CD8-positive, alpha-beta T cell (primary cell): ENCODE measurements at regions of chr12 and their contacts with region 1.

Region 1: DNA sequence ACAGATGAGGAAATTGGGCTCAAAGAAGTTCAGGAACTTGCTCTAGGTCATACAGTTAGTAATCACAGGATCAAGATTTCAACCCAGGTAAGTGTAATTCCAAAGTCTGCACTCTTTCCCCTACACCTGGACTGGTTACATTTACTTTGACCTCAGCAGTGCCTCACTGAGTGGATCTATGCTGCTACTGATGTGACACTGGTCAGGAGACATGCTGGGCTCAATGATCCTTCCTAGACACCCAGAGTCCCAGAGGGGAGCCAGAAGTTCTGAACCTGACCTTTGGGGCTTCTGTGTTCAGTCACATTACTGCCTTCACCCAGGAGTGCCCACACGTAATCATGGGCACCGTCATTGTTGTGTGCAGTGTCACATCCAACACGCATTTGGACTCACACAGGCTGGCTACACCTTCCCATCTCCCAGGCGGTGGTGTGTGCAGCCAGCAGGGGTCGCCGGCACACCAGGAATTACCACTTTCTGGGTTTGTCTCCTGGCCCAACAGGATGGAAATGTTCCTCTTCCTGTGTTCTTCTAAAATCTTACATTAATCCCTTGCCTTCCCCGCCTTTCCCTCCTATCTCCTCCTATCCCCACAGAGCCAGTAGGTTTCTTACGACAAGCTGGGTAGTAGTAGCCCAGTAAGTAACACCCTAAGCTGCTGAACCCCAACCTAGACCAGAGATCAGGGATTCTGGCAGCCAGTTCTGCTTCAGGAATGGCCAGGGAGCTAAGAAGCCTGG is 25.6 kb downstream of the CALCOCO1 start:
- DNase-seq: peak; percentile 52 to 86 (median 77)
- ATAC-seq: peak; percentile 92
- H3K4me3 ChIP-seq: no peak overlapping the region
- H3K4me3 Mint-ChIP-seq: no peak overlapping the region
- H3K27ac ChIP-seq: no peak overlapping the region
- H3K27ac Mint-ChIP-seq: no peak overlapping the region
- H3K4me1 ChIP-seq: peaks cover 3% of the 10 kb centered on the region
- H3K4me1 Mint-ChIP-seq: peaks cover 5% of the 10 kb centered on the region
- H3K27me3 ChIP-seq: peaks cover 19 to 24% of the 10 kb centered on the region in 2 experiments
- H3K27me3 Mint-ChIP-seq: peaks cover 77% of the 10 kb centered on the region
- CTCF ChIP-seq: peak; percentile 83

Region 2: GRCh38 chr12:53623548-53624385 is 77.9 kb before region 1 on chr12:
- CTCF ChIA-PET with region 1: no interaction called
- POLR2A ChIA-PET with region 1: no interaction called
- intact Hi-C with region 1: no loop called
- DNase-seq: no peak
- ATAC-seq: no peak
- H3K4me3 ChIP-seq: no peak overlapping the region
- H3K4me3 Mint-ChIP-seq: peak overlapping the region; percentile 93
- H3K27ac ChIP-seq: peak overlapping the region in 1 of 2 experiments; percentile 30
- H3K27ac Mint-ChIP-seq: peak overlapping the region; percentile 85
- H3K4me1 ChIP-seq: peaks cover 33% of the 10 kb centered on the region
- H3K4me1 Mint-ChIP-seq: peaks cover 52% of the 10 kb centered on the region
- H3K27me3 ChIP-seq: no peaks in the 10 kb centered on the region
- H3K27me3 Mint-ChIP-seq: no peaks in the 10 kb centered on the region
- CTCF ChIP-seq: no peak

Region 3: DNA sequence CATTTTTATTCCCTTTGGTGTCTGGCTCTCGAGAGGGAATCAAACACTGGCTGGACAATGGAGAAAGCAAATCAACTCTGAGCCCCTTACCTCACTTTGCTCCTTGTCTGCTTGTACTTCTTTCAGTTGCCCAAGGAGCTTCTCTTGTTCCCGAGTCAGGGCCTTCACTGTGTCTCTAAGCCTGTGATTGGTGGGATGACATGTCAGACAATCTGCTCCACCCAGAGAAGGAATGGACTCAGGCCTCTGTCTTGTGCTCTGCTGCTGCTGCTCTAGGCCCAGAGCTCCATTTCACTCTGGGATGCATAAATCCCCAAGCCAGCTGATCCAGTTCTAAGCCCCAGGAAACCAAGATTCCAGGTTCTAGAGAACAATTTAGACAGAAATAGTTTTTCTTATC is 18.0 kb after region 1 on chr12:
- CTCF ChIA-PET with region 1: interaction called, 11 read pairs
- POLR2A ChIA-PET with region 1: no interaction called
- intact Hi-C with region 1: no loop called
- DNase-seq: no peak
- ATAC-seq: no peak
- H3K4me3 ChIP-seq: no peak overlapping the region
- H3K4me3 Mint-ChIP-seq: no peak overlapping the region
- H3K27ac ChIP-seq: no peak overlapping the region
- H3K27ac Mint-ChIP-seq: no peak overlapping the region
- H3K4me1 ChIP-seq: no peaks in the 10 kb centered on the region
- H3K4me1 Mint-ChIP-seq: no peaks in the 10 kb centered on the region
- H3K27me3 ChIP-seq: no peaks in the 10 kb centered on the region
- H3K27me3 Mint-ChIP-seq: no peaks in the 10 kb centered on the region
- CTCF ChIP-seq: no peak

Region 4: GRCh38 chr12:53733051-53733806 is 31.5 kb after region 1 on chr12:
- CTCF ChIA-PET with region 1: interaction called, 42 read pairs
- POLR2A ChIA-PET with region 1: interaction called, 4 read pairs
- intact Hi-C with region 1: no loop called
- DNase-seq: no peak
- ATAC-seq: no peak
- H3K4me3 ChIP-seq: no peak overlapping the region
- H3K4me3 Mint-ChIP-seq: no peak overlapping the region
- H3K27ac ChIP-seq: no peak overlapping the region
- H3K27ac Mint-ChIP-seq: no peak overlapping the region
- H3K4me1 ChIP-seq: peaks cover 9% of the 10 kb centered on the region
- H3K4me1 Mint-ChIP-seq: peaks cover 12% of the 10 kb centered on the region
- H3K27me3 ChIP-seq: peaks cover 0 to 8% of the 10 kb centered on the region in 2 experiments
- H3K27me3 Mint-ChIP-seq: peaks cover 27% of the 10 kb centered on the region
- CTCF ChIP-seq: no peak

Region 5: DNA sequence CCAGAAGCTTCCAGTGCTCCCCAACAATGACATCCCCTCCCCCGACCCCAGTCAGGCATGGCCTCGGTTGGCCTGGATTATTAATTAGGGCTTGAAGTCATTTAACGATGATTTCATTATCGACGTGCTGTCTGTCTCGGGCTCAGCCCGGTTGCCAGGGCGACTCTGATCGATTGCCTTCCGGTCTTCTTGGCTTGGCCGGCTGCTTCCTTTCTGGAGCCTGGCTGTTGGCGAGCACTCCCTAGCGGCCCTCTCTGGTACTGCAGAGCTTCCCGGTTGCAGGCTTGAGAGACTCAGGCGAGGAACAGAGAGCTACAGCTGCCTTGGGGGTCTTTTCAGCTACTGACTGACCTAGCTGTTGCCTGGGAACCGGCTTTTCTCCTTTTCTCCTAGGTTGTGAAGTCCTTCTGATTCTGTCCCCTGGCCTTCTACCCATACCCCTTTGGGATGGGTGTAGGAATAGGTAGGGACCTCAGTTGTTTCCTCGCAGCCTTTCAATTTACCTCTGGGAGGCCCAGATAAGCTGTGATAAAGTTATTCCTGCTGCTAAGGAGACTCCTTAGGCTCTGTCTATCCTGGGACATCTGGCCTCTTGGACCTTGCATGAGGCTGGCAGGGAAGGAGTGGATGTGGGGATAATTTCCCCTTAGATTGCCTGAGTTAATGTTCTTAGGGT is 55.5 kb after region 1 on chr12:
- CTCF ChIA-PET with region 1: interaction called, 16 read pairs
- POLR2A ChIA-PET with region 1: no interaction called
- intact Hi-C with region 1: no loop called
- DNase-seq: peak; percentile 67 to 86 (median 80)
- ATAC-seq: peak; percentile 97
- H3K4me3 ChIP-seq: peak overlapping the region in 1 of 2 experiments; percentile 4
- H3K4me3 Mint-ChIP-seq: peak overlapping the region; percentile 60
- H3K27ac ChIP-seq: no peak overlapping the region
- H3K27ac Mint-ChIP-seq: no peak overlapping the region
- H3K4me1 ChIP-seq: peaks cover 7% of the 10 kb centered on the region
- H3K4me1 Mint-ChIP-seq: peaks cover 12% of the 10 kb centered on the region
- H3K27me3 ChIP-seq: peaks cover 11 to 14% of the 10 kb centered on the region in 2 experiments
- H3K27me3 Mint-ChIP-seq: peaks cover 37% of the 10 kb centered on the region
- CTCF ChIP-seq: peak; percentile 87